Heart right ventricle (tissue), 16 donors: ENCODE measurements at regions of chr6 and their contacts with region 1.

Region 1: GRCh38 chr6:157434349-157435033 is 53.5 kb downstream of the ZDHHC14 start:
- DNase-seq: peak; percentile 42 to 48
- ATAC-seq: peak; percentile 34 to 72 (median 56)
- H3K4me3 ChIP-seq: no peak overlapping the region
- H3K27ac ChIP-seq: peak overlapping the region in 9 of 10 donors; percentile 26 to 91 (median 76)
- H3K4me1 ChIP-seq: peaks cover 8 to 93% (median 69%) of the 10 kb centered on the region in 9 donors
- H3K27me3 ChIP-seq: no peaks in the 10 kb centered on the region
- CTCF ChIP-seq: no peak

Region 2: DNA sequence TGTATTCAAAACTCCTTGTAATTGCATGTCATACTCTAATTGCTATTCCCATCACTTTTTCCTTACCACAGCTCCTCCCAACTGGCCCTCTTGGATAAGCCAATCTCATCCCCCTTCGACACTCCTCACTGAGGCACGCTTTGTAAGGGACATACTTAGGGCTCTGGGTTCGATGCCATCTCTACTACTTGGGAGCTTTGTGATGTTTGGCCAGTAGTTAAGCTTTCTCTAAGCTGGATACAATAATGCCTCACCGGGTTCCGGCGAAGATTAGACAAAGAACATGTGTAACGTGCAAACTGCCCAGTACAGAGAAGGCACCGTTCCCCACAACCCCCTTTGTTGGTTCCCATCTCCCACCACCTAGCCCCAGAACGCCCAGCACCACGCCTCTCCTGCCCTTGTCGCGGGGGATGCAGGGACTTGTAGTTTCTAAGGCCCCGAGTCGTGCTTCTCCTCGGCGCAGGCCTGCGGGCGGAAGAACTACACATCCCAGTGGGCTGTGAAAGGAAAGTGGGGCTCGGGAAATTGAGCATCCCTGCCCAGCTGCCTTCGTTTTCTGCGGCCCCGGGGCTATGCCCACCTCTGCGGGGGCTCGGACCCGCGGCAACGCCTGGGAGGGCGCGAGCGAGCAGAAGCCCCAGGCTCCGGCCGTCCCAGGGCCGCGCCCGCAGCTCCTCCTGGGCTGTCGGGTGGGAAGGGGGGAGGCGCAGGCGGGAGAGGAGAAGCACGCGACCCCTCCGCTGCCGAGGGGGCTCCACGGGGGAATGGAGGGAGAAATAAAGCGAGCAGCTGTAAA is 54.6 kb before region 1 on chr6:
- intact Hi-C with region 1: loop called in 3 of 10 experiments (anchors 2 to 5 kb)
- DNase-seq: peak; percentile 87 to 94
- ATAC-seq: peak; percentile 90 to 95 (median 94)
- H3K4me3 ChIP-seq: peak overlapping the region; percentile 74 to 99 (median 95)
- H3K27ac ChIP-seq: peak overlapping the region; percentile 76 to 98 (median 96)
- H3K4me1 ChIP-seq: peaks cover 0 to 31% (median 22%) of the 10 kb centered on the region in 9 donors
- H3K27me3 ChIP-seq: no peaks in the 10 kb centered on the region
- CTCF ChIP-seq: no peak

Region 3: GRCh38 chr6:157471895-157472686 is 37.6 kb after region 1 on chr6:
- intact Hi-C with region 1: loop called in 1 of 10 experiments (anchors 5 kb)
- DNase-seq: no peak
- ATAC-seq: peak in 1 of 8 donors; percentile 61
- H3K4me3 ChIP-seq: no peak overlapping the region
- H3K27ac ChIP-seq: no peak overlapping the region
- H3K4me1 ChIP-seq: no peaks in the 10 kb centered on the region
- H3K27me3 ChIP-seq: no peaks in the 10 kb centered on the region
- CTCF ChIP-seq: no peak